ENCODE measurements at regions of chr17 and their contacts with region 1.

Region 1: DNA sequence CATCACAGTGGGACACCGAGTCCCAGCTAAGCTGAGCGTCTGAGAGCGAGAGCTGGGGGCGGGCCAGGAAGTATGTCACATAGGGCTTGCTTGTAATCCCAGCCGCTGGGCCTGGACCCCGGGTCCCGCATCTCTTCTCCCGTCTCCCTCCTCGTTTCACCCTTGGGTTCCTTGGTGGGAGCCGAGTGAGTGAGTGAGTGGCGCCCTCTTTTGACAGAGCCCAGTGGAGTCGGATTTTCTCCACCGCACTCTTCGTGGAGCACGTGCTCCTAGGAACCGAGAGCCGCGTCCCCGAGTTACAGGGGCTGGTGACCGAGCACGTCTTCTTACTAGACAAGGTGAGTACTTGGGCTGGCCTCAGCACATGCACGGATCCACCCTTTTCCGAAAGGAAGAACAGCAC is 50.8 kb upstream of the ENDOV start:
- DNase-seq: peak; percentile 20
- ATAC-seq: peak; percentile 68
- H3K4me3 ChIP-seq: no peak overlapping the region
- H3K27ac ChIP-seq: no peak overlapping the region
- H3K4me1 ChIP-seq: no peaks in the 10 kb centered on the region
- H3K27me3 ChIP-seq: no peaks in the 10 kb centered on the region
- CTCF ChIP-seq: peak; percentile 83
- EP300 ChIP-seq: no peak
- POLR2A ChIP-seq: no peak
- RAD21 ChIP-seq: peak; percentile 77

Region 2: DNA sequence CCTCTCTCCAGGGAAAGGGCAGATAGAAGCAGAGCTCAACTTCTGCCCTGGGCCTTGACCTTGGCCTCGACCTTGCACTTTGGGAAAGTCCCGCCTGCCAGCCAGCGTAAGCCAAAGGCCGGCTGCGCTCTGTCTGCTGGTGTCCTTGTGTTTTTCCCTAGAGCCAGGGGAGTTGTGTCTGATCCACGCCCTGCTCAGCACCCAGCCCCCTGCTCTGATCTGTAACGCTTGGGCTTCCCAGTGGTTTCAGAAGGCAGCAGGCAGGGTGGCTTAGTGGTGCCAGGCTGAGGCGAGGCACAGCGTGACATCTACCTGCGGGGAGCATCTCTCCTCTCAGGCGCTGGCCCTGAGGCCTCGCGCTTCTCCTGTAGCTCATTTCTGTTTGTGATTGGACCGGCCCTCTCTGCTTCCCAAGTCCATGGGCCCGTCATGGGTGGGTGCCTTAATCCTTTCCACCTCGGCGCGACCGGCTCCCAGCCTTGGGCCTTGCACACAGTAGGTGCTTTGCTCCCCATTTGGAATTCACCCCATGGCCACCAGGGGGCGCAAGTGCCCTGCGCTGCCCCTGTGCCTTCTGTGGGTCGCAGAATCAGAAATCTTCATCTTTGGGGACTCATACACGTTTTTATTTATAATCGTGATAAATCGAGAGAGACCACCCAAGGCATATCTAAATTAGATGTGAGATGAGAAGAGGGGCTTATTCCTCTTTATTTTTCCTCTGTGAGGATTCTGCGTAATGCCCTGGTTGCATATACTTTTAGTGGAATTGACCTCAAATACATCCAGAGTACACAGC is 168.3 kb before region 1 on chr17:
- CTCF ChIA-PET with region 1: interaction called, 10 read pairs
- POLR2A ChIA-PET with region 1: no interaction called
- in situ Hi-C with region 1: no loop called
- intact Hi-C with region 1: no loop called
- DNase-seq: peak; percentile 48
- ATAC-seq: peak; percentile 49
- H3K4me3 ChIP-seq: no peak overlapping the region
- H3K27ac ChIP-seq: no peak overlapping the region
- H3K4me1 ChIP-seq: peaks cover 44% of the 10 kb centered on the region
- H3K27me3 ChIP-seq: peaks cover 19 to 63% of the 10 kb centered on the region in 2 experiments
- CTCF ChIP-seq: peak; percentile 92
- EP300 ChIP-seq: no peak
- POLR2A ChIP-seq: no peak
- RAD21 ChIP-seq: peak; percentile 90

Region 3: GRCh38 chr17:80339741-80340456 is 24.3 kb before region 1 on chr17:
- CTCF ChIA-PET with region 1: no interaction called
- POLR2A ChIA-PET with region 1: no interaction called
- in situ Hi-C with region 1: no loop called
- intact Hi-C with region 1: loop called (anchors 1 kb)
- DNase-seq: no peak
- ATAC-seq: no peak; the same call in 1 of the 3 replicates
- H3K4me3 ChIP-seq: no peak overlapping the region
- H3K27ac ChIP-seq: no peak overlapping the region
- H3K4me1 ChIP-seq: no peaks in the 10 kb centered on the region
- H3K27me3 ChIP-seq: no peaks in the 10 kb centered on the region
- CTCF ChIP-seq: no peak
- EP300 ChIP-seq: no peak
- POLR2A ChIP-seq: no peak
- RAD21 ChIP-seq: no peak

Region 4: DNA sequence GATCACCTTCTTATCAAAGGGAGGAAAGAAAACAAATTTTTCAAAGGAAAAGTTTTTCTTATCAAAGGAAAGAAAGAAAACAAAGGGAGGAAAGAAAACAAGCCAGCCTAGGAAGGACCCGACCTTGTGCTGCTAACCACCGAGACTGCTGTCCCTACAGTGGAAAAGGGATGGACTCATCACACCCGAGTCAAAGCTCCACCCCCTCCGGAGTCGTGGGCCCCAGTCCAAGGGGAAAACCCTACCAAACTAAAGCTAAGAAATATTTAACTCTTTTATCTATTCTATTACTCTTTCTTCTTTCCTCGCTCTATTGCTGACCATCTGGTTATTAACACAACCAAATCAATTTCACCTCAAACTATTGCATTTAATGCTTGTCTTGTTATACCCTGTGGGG is 44.7 kb after region 1 on chr17:
- CTCF ChIA-PET with region 1: no interaction called
- POLR2A ChIA-PET with region 1: no interaction called
- in situ Hi-C with region 1: no loop called
- intact Hi-C with region 1: no loop called
- DNase-seq: no peak
- ATAC-seq: no peak
- H3K4me3 ChIP-seq: no peak overlapping the region
- H3K27ac ChIP-seq: no peak overlapping the region
- H3K4me1 ChIP-seq: peaks cover 20% of the 10 kb centered on the region; the same call in 1 of the 2 replicates
- H3K27me3 ChIP-seq: peaks cover 0 to 2% of the 10 kb centered on the region in 2 experiments; a peak in 3 of 5 replicates
- CTCF ChIP-seq: no peak
- EP300 ChIP-seq: no peak
- POLR2A ChIP-seq: no peak
- RAD21 ChIP-seq: no peak

Region 5: DNA sequence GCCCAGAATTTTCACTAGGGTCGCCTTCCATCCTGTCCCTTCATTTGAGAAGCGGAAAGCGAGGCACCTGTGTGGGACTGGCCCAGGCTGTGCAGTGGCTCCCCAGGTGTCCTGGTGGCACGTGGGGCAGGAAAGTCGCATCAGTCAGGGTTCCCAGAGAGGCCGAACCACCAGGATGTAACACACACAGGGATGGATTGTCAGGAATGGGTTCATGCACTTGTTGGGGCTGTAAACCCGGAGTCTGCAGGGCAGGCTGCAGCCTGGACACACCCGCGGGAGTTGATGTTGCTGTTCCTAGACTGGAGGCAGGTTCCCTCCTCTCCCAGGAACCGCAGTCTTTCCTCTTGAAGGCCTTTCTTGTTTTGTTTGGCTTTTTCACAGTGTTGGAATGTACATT is 149.7 kb after region 1 on chr17:
- CTCF ChIA-PET with region 1: no interaction called
- POLR2A ChIA-PET with region 1: no interaction called
- in situ Hi-C with region 1: no loop called
- intact Hi-C with region 1: no loop called
- DNase-seq: no peak
- ATAC-seq: no peak
- H3K4me3 ChIP-seq: no peak overlapping the region
- H3K27ac ChIP-seq: no peak overlapping the region
- H3K4me1 ChIP-seq: no peaks in the 10 kb centered on the region
- H3K27me3 ChIP-seq: peaks cover 0 to 59% of the 10 kb centered on the region in 2 experiments
- CTCF ChIP-seq: no peak
- EP300 ChIP-seq: no peak
- POLR2A ChIP-seq: no peak
- RAD21 ChIP-seq: no peak